ENCODE measurements at regions of chr2 and their contacts with region 1.

Region 1: DNA sequence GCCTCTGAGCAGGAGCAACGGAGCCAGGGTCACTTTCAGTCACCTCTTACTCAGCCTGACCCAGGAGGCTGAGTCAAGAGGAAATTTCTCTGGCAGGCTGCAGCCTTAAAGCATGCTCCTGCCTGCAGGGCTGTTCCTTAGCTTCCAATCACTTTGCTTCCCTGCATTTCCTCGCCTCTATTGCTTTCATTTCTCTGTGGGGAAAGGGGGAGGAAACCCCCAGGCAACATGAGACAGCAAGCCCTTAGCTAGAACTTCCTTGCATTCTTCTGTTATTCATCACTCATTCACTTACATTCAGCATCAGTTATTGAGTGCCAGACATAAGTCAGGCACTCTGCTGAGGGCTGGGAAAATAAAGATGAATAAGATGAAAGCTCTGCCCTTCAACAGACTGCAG is 13.0 kb downstream of the XDH start:
- DNase-seq: peak; percentile 93
- H3K27ac ChIP-seq: peak overlapping the region; percentile 78
- CTCF ChIP-seq: no peak

Region 2: DNA sequence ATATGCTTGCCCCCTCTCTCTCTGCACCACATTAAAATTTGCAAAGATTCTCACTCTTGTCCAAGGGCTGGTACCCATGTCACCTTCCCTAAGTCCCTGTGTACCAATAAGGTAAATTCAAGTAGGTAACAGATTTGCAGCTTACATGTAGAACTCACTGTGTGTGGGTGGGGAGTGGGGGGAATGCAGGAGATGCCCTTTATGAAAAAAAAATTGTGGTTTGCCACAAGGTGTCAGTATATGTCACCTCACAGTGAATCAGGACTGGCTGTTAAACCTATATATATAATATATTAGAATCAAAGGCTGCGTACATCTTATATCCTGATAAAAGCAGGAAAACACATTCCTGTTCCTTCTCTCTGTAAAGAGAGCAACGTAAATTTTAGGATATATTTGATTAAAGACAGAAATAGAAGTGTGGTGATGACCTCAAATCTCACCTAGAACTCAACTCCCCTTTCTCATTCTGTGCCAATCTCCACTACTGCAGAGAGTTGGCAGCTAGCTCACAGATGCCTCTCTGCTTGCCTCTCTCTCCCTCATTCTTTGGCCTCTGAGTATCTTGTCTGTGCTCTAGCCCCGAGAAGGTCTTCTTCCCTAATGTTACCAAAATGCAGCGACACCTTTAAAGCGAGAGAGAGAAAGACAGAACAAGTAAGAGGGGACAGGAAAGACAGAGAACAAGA is 12.4 kb after region 1 on chr2:
- CTCF ChIA-PET with region 1: interaction called, 10 read pairs
- POLR2A ChIA-PET with region 1: no interaction called
- DNase-seq: no peak
- H3K27ac ChIP-seq: no peak overlapping the region
- CTCF ChIP-seq: no peak

Measured in RWPE1 (cell line).